ENCODE measurements at regions of chr10 and their contacts with region 1.

Region 1: GRCh38 chr10:70758757-70759514 is 26.2 kb downstream of the TBATA start:
- DNase-seq: no peak
- ATAC-seq: peak; percentile 34
- H3K4me3 Mint-ChIP-seq: no peak overlapping the region
- H3K27ac Mint-ChIP-seq: no peak overlapping the region
- H3K4me1 Mint-ChIP-seq: no peaks in the 10 kb centered on the region
- H3K27me3 Mint-ChIP-seq: peaks cover 6% of the 10 kb centered on the region
- CTCF ChIP-seq: peak; percentile 23

Region 2: GRCh38 chr10:70558871-70559810 is 199.8 kb before region 1 on chr10:
- CTCF ChIA-PET with region 1: interaction called, 6 read pairs
- POLR2A ChIA-PET with region 1: no interaction called
- intact Hi-C with region 1: loop called (anchors 2 kb)
- DNase-seq: no peak
- ATAC-seq: peak; percentile 84
- H3K4me3 Mint-ChIP-seq: peak overlapping the region; percentile 68
- H3K27ac Mint-ChIP-seq: no peak overlapping the region
- H3K4me1 Mint-ChIP-seq: peaks cover 19% of the 10 kb centered on the region
- H3K27me3 Mint-ChIP-seq: no peaks in the 10 kb centered on the region
- CTCF ChIP-seq: no peak

Region 3: DNA sequence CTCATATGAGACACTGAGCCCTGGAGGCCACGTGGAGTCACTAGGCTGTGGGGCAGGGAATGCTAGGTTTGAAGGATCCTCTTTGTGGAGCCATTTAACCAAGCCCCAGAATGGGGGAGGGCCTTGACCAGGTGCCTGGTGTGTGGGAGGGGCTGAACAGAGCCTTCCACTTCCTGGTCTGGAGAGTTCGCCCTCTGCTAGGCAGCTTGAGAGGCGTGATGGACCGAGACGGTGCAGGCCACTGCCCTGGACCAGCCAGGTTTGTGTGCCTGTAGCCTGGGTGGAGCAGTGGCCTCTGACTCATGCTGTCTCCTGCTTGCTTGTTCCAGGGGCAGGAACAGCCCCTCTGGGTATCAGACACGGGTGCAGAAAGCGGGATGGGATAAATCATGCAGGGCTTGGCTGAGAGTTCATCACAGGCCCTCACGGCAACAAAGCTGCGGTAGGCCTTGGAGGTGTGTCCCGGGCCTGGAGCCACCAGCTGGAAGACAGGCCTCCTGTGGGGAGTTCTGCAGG is 59.2 kb before region 1 on chr10:
- CTCF ChIA-PET with region 1: no interaction called
- POLR2A ChIA-PET with region 1: no interaction called
- intact Hi-C with region 1: no loop called
- DNase-seq: no peak
- ATAC-seq: no peak
- H3K4me3 Mint-ChIP-seq: no peak overlapping the region
- H3K27ac Mint-ChIP-seq: no peak overlapping the region
- H3K4me1 Mint-ChIP-seq: no peaks in the 10 kb centered on the region
- H3K27me3 Mint-ChIP-seq: no peaks in the 10 kb centered on the region
- CTCF ChIP-seq: no peak

Region 4: GRCh38 chr10:70880077-70880534 is 121.2 kb after region 1 on chr10:
- CTCF ChIA-PET with region 1: no interaction called
- POLR2A ChIA-PET with region 1: no interaction called
- intact Hi-C with region 1: loop called (anchors 1 kb)
- DNase-seq: peak; percentile 40
- ATAC-seq: peak; percentile 96
- H3K4me3 Mint-ChIP-seq: no peak overlapping the region
- H3K27ac Mint-ChIP-seq: peak overlapping the region; percentile 25
- H3K4me1 Mint-ChIP-seq: peaks cover 4% of the 10 kb centered on the region
- H3K27me3 Mint-ChIP-seq: no peaks in the 10 kb centered on the region
- CTCF ChIP-seq: peak; percentile 84

Measured in activated B cell treated with CpG ODN at 0.5 μM for 24 hours (primary cell).